Activated B cell treated with CpG ODN at 0.5 μM for 24 hours (primary cell): ENCODE measurements at regions of chr12 and their contacts with region 1.

Region 1: DNA sequence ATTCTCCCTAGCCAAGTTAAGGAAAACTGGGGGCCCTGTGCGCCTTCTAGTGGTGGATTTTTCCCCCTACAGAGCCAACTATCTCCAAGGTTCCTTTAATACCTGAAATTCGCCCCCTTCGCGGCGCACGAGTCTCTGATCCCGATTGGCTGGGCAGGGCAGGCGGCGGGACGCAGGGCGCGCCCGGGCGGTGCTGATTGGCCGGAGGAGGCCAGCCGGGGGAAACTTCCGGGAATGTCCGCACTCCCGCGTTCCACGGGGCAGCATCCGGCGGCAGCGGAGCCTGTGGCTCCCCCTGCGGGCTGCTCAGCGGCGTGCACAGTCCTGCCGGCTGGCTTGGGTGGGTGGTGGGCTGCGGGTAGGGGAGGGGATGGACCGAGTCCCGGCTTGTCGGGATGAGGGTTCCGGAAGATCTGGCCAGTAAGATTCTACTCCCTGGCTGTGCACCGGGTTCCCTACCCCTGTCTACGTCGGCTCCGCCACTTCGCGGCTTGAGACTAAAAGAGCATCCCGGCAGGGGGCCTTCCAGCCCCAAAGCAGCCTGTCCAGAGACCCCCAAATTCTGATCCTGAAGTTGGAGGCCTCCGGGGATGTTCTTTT is at the start of gene NABP2:
- DNase-seq: peak; percentile 88
- ATAC-seq: peak; percentile 72
- H3K4me3 Mint-ChIP-seq: peak within 1 kb of the TSS; percentile 99
- H3K27ac Mint-ChIP-seq: peak within 1 kb of the TSS; percentile 98
- H3K4me1 Mint-ChIP-seq: peaks cover 48% of the 10 kb centered on the region
- H3K27me3 Mint-ChIP-seq: no peaks in the 10 kb centered on the region
- CTCF ChIP-seq: peak; percentile 67
- total RNA-seq, gene NABP2: 27.7 and 31.4 TPM in 2 replicates

Region 2: DNA sequence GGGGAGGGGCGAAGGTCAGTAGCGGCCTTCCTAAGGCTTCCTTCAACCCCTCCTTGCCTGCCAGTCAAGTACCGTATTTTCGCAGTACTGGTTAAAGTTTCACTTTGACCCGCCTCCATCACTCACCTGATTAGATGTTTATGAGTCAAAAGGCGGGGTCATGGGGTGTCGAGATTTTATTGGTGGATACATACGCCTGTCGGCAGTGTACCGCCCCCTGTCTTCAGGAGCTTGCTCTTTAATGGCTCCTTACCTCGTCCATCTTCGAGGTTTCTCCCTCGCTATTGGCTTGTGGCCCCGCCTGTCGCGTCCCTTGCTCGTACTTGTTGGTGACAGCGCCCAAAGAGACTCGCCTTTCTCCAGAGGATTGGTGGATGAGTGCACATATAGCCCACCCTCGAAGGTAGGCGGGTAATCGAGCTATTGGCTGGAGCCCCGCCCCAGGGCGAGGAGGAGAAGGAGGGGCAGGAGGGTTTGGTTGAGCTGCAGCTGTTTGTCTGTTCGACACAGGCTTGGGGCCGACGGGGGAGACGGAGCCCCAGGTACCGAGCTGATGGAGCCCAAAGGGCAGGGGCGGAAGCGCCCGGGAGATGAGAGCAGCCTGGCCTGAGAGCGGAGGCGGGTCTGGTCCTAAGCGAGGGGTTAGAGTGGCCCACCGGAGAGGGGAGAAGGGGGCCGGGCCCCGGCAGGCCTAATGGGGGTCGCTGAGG is 250.4 kb before region 1 on chr12 and contains the start of gene RAB5B:
- CTCF ChIA-PET with region 1: no interaction called
- POLR2A ChIA-PET with region 1: interaction called, 7 read pairs
- intact Hi-C with region 1: loop called (anchors 5 kb)
- DNase-seq: peak; percentile 83
- ATAC-seq: peak; percentile 87
- H3K4me3 Mint-ChIP-seq: no peak within 1 kb of the TSS
- H3K27ac Mint-ChIP-seq: no peak within 1 kb of the TSS
- H3K4me1 Mint-ChIP-seq: peaks cover 27% of the 10 kb centered on the region
- H3K27me3 Mint-ChIP-seq: no peaks in the 10 kb centered on the region
- CTCF ChIP-seq: no peak
- total RNA-seq, gene RAB5B: 82.1 and 83.8 TPM in 2 replicates

Region 3: GRCh38 chr12:56158029-56158925 is 65.9 kb before region 1 on chr12 and contains the start of gene MYL6:
- CTCF ChIA-PET with region 1: no interaction called
- POLR2A ChIA-PET with region 1: interaction called, 9 read pairs
- intact Hi-C with region 1: loop called (anchors 1 kb)
- DNase-seq: peak; percentile 70
- ATAC-seq: peak; percentile 86
- H3K4me3 Mint-ChIP-seq: peak within 1 kb of the TSS; percentile 94
- H3K27ac Mint-ChIP-seq: peak within 1 kb of the TSS; percentile 95
- H3K4me1 Mint-ChIP-seq: peaks cover 48% of the 10 kb centered on the region
- H3K27me3 Mint-ChIP-seq: no peaks in the 10 kb centered on the region
- CTCF ChIP-seq: no peak
- total RNA-seq, gene MYL6: 921 and 1,059 TPM in 2 replicates

Region 4: DNA sequence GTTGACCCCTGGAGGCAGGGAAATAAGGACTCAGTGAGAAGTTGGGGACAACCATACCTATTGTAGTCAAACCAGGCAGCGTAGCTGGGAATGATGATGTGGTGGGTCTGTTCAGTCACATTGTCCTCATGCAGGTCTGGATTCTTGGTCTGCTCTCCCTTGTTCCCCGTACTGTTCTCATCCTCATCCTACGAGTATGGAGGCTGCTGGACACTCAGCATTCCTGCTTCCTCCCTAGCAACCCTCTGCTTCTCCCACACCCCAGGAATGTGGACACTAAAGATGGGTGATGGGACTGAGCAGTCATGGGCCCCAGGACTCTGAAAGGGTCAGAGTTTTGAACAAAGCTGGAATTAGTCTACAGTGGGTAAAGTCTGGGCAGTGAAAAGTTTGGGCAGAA is 45.9 kb before region 1 on chr12:
- CTCF ChIA-PET with region 1: no interaction called
- POLR2A ChIA-PET with region 1: no interaction called
- intact Hi-C with region 1: no loop called
- DNase-seq: no peak
- ATAC-seq: no peak
- H3K4me3 Mint-ChIP-seq: no peak overlapping the region
- H3K27ac Mint-ChIP-seq: no peak overlapping the region
- H3K4me1 Mint-ChIP-seq: no peaks in the 10 kb centered on the region
- H3K27me3 Mint-ChIP-seq: no peaks in the 10 kb centered on the region
- CTCF ChIP-seq: no peak

Region 5: GRCh38 chr12:56237552-56237951 is 13.3 kb after region 1 on chr12:
- CTCF ChIA-PET with region 1: no interaction called
- POLR2A ChIA-PET with region 1: no interaction called
- intact Hi-C with region 1: no loop called
- DNase-seq: no peak
- ATAC-seq: no peak
- H3K4me3 Mint-ChIP-seq: no peak overlapping the region
- H3K27ac Mint-ChIP-seq: no peak overlapping the region
- H3K4me1 Mint-ChIP-seq: peaks cover 8% of the 10 kb centered on the region
- H3K27me3 Mint-ChIP-seq: no peaks in the 10 kb centered on the region
- CTCF ChIP-seq: no peak

Region 6: GRCh38 chr12:56258057-56258819 is 34.0 kb after region 1 on chr12 and contains the start of gene ANKRD52:
- CTCF ChIA-PET with region 1: interaction called, 8 read pairs
- POLR2A ChIA-PET with region 1: interaction called, 11 read pairs
- intact Hi-C with region 1: loop called (anchors 1 kb)
- DNase-seq: peak; percentile 89
- ATAC-seq: peak; percentile 94
- H3K4me3 Mint-ChIP-seq: peak within 1 kb of the TSS; percentile 91
- H3K27ac Mint-ChIP-seq: peak within 1 kb of the TSS; percentile 77
- H3K4me1 Mint-ChIP-seq: peaks cover 21% of the 10 kb centered on the region
- H3K27me3 Mint-ChIP-seq: no peaks in the 10 kb centered on the region
- CTCF ChIP-seq: peak; percentile 28
- total RNA-seq, gene ANKRD52: 44.1 and 44.8 TPM in 2 replicates

Region 7: DNA sequence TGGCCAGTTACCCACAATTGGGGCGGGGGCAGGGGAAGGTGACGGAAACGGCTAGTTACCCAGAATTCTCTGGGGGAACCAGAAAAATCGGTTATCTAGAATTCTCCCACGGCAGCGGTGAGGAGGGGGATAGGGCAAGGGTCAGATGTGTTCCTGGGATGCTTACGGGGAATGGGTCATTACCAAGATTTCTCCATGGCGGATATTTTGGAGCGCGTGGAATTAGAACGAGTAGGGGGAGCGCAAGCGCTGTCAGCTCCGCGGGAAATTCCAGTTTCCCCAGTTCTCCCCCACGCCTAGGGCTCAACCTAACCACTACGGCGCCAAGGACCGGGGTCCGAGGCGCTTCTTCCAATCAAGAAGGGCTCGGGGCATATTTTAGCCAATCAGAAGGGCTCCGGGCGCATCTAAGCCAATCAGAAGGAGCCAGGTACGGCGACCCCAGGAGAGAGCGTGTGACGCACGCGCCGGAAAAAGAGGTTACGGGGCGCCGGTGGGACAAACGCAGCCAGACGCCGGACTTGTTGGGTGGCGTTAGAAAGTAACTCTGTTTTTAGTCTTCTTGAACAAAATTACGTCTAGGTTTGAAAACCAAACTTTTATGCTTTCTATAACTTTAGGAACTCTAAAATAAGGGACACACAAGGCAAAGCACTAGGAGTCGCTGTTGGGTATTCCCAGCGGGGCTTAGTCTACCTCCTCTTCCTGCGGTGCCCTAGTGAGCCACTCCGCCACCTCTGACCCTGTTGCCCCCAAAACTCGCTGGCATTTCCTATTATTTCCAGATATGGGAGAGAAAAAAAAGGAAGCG is 109.7 kb after region 1 on chr12 and contains the start of gene PAN2:
- CTCF ChIA-PET with region 1: no interaction called
- POLR2A ChIA-PET with region 1: interaction called, 13 read pairs
- intact Hi-C with region 1: no loop called
- DNase-seq: peak; percentile 85
- ATAC-seq: peak; percentile 91
- H3K4me3 Mint-ChIP-seq: peak within 1 kb of the TSS; percentile 96
- H3K27ac Mint-ChIP-seq: peak within 1 kb of the TSS; percentile 100
- H3K4me1 Mint-ChIP-seq: peaks cover 46% of the 10 kb centered on the region
- H3K27me3 Mint-ChIP-seq: no peaks in the 10 kb centered on the region
- CTCF ChIP-seq: no peak
- total RNA-seq, gene PAN2: 86.3 and 98.9 TPM in 2 replicates

Region 8: DNA sequence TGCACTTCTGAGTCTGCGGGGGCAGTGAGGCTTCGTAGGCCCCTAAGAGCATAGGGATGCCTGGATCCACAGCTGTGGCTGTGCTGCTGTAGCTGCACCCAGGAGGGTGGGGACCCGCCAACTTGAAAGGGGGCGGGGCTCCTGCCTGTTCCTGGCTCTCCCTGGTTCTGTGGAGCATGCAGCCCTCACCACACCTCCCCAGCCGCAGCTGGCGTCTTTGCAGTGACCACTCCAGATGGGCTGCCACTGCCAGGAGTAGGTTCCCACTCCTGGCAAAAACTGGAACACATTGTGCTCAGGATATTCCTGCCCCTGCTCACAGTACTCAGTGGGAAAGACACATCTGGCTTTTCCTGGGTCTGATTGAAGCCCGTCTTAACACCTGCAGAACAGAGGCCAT is 189.2 kb after region 1 on chr12:
- CTCF ChIA-PET with region 1: no interaction called
- POLR2A ChIA-PET with region 1: no interaction called
- intact Hi-C with region 1: no loop called
- DNase-seq: no peak
- ATAC-seq: no peak
- H3K4me3 Mint-ChIP-seq: no peak overlapping the region
- H3K27ac Mint-ChIP-seq: no peak overlapping the region
- H3K4me1 Mint-ChIP-seq: no peaks in the 10 kb centered on the region
- H3K27me3 Mint-ChIP-seq: no peaks in the 10 kb centered on the region
- CTCF ChIP-seq: no peak

Region 9: DNA sequence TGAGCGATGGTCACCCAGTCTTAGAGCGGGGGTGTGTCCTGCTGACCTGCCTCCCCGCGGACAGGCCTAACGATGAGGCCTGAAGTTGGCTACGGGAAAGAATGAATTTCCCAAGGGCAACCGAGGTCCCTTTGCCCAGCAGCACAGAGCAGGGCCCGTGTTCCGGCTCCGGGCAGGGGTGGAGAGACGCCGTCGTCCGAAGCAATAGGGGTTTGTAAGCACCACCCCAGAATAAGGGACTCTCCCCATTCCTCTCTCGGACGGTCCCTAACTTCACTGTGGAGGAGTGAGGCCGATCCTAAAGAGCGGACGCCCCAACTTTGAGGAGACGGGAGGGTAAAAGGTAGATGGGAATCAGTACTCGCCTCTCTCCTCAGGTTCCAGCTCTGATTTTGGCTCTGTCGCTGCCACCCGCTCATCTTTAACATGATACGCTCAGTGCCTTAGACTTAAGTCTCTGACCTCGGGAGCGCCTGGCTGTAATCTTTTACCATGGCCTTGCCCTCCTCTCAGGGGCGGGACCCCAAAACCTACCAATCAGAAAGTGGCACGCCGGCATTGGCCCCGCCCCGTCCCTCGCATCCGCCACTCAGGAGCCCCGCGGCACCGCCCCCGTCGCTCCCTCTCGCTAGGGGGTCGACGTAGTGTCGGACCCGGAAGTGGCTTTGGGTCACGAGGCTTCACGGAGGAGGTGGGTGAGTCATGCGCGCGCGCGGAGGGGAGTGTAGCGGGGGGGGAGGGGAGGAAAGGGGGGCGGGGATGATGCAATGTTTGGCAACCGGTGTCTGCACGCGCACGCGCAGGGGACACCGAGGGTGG is 1296.1 kb after region 1 on chr12 and contains the start of gene DDIT3:
- CTCF ChIA-PET with region 1: no interaction called
- POLR2A ChIA-PET with region 1: no interaction called
- intact Hi-C with region 1: loop called (anchors 2 kb)
- DNase-seq: peak; percentile 99
- ATAC-seq: peak; percentile 73
- H3K4me3 Mint-ChIP-seq: peak within 1 kb of the TSS; percentile 98
- H3K27ac Mint-ChIP-seq: peak within 1 kb of the TSS; percentile 99
- H3K4me1 Mint-ChIP-seq: peaks cover 59% of the 10 kb centered on the region
- H3K27me3 Mint-ChIP-seq: no peaks in the 10 kb centered on the region
- CTCF ChIP-seq: no peak
- total RNA-seq, gene DDIT3: 30.5 and 34.3 TPM in 2 replicates